Aorta (tissue), 5 donors: ENCODE measurements at regions of chr14 and their contacts with region 1.

Region 1: GRCh38 chr14:77565289-77565993 is 51.0 kb downstream of the SPTLC2 start:
- DNase-seq: no peak
- ATAC-seq: no peak
- H3K4me3 ChIP-seq: no peak overlapping the region
- H3K27ac ChIP-seq: no peak overlapping the region
- H3K4me1 ChIP-seq: no peaks in the 10 kb centered on the region
- H3K27me3 ChIP-seq: no peaks in the 10 kb centered on the region

Region 2: DNA sequence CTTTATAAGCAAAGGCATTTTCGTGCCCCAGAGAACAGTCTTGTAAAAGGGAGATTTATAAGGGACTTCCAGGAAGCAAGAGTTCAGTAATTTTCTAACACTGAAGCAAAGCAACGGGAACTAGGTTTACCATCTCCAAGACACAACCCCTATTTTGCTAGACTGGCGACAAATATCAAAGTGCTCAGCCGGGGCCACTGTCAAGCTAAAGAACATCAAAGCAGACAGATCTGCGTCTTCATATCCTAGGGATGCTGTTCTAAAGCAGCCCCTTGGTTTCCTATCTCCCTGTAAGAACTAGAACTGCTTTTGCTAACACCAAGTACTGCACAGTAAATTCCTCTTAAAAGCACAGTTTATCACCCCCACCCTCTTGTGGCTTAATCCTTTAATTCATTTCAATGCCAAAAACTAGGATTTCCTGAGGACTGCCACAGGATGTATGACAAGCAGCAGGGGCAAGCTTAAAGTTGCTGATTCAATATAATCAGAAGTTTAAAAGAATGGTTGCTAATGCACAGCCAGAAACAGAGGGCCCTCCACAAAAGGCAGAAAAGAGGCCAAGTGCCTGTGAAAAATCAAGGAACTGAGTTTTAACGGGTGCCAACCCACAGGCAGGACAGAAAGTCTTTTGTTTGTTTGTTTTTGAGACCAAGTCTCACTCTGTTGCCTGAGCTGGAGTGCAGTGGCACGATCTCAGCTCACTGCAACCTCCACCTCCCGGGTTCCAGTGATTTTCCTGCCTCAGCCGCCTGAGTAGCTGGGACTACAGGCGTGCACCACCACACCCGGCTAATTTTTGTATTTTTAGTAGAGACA is 22.8 kb before region 1 on chr14:
- intact Hi-C with region 1: loop called in 1 of 2 experiments (anchors 1 kb)
- DNase-seq: no peak
- ATAC-seq: peak; percentile 50
- H3K4me3 ChIP-seq: no peak overlapping the region
- H3K27ac ChIP-seq: peak overlapping the region in 1 of 2 donors; percentile 56
- H3K4me1 ChIP-seq: peaks cover 3 to 5% of the 10 kb centered on the region in 2 donors
- H3K27me3 ChIP-seq: no peaks in the 10 kb centered on the region